ENCODE measurements at regions of chr20 and their contacts with region 1.

Region 1: DNA sequence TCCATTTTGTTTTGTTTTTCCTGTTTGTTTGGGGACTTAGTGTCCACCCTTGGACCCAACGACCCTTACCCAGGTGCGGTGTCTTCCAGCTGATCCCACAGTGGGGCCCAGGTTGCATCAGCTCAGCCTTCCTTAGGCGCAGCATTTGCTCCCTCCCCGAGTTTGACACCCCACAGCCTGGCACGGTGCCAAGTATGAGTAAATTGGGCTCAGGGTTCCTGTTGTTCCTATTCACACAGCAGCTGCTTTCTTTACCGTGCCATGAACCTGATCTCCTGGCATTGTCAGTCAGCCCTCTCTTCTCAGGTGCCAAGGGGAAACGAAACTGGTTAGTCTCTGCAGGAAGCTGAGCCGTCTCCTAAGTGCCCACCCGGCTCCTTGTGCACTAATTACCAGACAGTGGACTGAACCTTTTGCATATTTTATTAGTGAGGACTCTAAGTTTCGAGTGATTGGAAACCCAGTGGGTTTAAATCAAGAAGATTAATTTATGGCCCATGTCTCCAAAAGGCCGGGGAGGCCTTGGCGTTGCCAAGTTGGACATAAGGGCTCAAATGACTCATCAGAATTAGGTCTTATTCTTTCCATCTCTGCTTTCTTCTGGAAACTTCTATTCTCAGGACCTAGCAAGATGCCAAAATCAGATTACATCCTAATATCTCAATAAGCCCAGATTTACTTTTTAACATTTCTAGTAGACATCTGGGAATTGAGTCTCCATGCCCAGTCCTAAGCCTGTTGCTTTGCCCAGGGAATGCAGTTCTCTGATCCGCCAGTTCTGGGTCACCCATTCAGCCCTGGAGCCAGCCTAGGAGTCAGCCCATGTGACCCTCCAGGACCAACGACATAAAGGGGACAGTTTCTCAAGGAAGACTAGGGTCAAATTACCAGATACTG is 68.8 kb downstream of the TSHZ2 start:
- DNase-seq: no peak
- ATAC-seq: peak; percentile 42

Region 2: DNA sequence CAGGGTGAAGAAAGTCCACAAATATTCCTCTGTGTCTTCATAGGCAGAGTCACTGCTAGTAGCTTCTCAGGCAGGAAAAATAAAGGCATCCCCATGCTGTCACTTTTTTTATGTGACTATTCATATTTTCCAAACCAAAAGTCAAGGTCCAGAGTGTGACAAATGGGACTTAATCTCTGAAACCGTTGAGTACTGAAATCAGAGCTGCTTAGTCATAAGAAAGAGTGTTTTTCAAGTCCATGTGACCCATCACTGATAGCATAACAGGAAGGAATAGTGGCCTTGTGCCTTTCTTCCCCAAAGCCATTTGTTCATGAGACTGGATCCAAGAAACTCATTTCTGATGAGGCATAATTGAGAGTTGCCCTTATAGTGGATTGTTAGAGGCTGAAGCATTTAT is 279.1 kb before region 1 on chr20:
- intact Hi-C with region 1: no loop called
- DNase-seq: no peak
- ATAC-seq: peak; percentile 56

Region 3: DNA sequence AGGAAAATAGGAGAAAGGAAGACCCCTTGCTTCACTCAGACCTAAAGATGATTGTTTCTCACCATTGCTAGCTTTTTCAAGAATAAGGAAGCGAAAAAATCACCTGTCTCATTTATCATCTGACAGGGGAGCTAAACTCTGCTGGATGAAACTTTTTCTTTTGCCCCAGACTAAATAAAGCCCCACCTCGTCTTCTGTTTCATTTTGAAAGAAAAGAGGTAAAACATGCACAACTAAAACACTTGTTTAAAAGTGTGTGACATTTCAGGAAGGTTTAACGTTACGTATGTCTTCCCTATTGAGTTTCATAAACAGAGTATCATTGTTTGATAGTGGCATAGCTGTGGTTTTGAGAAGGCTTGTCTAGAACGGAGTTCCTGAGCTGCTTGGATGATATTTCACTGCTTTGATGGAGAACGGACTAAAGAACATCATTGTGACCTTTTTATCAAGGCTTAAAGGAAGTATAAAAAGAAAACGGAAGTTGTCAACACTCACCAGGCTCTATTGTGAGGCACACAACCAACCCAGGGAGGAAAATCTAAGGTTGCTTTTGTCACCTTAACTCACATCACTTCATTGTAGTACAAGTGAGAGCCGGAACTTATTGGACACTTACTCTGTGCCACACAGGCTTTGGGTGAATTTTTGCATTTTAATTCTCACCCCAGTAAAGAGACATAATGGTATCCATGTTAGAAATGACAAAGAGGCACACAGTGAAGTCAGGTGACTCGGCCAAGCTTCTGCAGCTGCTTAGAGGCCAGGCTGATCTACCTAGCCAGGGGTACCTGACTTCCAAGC is 39.2 kb before region 1 on chr20:
- intact Hi-C with region 1: no loop called
- DNase-seq: no peak
- ATAC-seq: no peak

Region 4: GRCh38 chr20:53097371-53097770 is 56.4 kb after region 1 on chr20:
- intact Hi-C with region 1: loop called (anchors 10 kb)
- DNase-seq: no peak
- ATAC-seq: peak; percentile 57

Measured in Right ventricle myocardium inferior (tissue), 1 donor.